Posterior vena cava (tissue), 2 donors: ENCODE measurements at regions of chr13 and their contacts with region 1.

Region 1: GRCh38 chr13:66780814-66781213 is 449.3 kb downstream of the PCDH9 start:
- DNase-seq: no peak

Region 2: GRCh38 chr13:66794340-66795031 is 13.7 kb after region 1 on chr13:
- intact Hi-C with region 1: loop called in 1 of 2 experiments (anchors 1 kb)
- DNase-seq: no peak